ENCODE measurements at regions of chr17 and their contacts with region 1.

Region 1: DNA sequence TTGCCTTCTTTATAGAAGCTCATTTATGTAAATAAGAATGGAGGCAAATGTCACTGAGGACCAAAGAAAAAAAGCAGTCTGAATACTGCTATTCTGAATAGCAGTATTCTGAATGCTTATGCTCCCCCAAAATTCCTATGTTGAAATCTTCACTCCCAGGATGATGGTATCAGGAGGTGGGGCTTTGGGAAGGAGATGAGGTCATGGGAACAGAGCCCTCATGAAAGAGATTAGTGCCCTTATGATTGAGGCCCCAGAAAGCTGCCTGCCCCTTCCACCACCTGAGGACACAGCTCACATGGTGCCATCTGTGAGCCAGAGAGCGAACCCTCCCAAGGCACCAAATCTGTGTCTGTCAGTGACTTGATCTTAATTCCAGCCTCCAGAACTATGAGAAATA is 28.8 kb downstream of the HEATR6 start:
- DNase-seq: no peak
- ATAC-seq: no peak
- H3K4me3 ChIP-seq: no peak overlapping the region
- H3K27ac ChIP-seq: no peak overlapping the region
- H3K4me1 ChIP-seq: no peaks in the 10 kb centered on the region
- H3K27me3 ChIP-seq: no peaks in the 10 kb centered on the region

Region 2: DNA sequence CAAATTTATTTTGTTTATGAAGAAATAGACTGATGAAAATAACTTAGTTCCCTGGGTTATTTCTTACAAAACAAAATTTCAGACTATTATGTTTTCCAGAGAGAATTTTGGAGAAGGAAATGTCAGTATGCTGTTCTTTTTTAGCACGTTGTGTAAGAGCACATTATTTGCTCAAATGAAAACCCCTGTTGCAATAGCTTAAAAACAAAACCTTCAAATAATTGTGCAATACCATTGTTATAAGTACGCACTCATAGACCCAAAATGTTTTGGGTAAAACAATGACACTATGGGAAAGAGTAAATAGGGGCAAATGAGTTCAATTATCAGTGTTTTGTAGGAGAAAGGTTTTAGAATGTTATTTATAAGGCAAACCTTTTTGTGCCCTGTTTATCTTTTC is 324.2 kb before region 1 on chr17:
- intact Hi-C with region 1: loop called in 1 of 2 experiments (anchors 5 kb)
- DNase-seq: no peak
- ATAC-seq: peak; percentile 84
- H3K4me3 ChIP-seq: no peak overlapping the region
- H3K27ac ChIP-seq: no peak overlapping the region
- H3K4me1 ChIP-seq: no peaks in the 10 kb centered on the region
- H3K27me3 ChIP-seq: no peaks in the 10 kb centered on the region

Region 3: DNA sequence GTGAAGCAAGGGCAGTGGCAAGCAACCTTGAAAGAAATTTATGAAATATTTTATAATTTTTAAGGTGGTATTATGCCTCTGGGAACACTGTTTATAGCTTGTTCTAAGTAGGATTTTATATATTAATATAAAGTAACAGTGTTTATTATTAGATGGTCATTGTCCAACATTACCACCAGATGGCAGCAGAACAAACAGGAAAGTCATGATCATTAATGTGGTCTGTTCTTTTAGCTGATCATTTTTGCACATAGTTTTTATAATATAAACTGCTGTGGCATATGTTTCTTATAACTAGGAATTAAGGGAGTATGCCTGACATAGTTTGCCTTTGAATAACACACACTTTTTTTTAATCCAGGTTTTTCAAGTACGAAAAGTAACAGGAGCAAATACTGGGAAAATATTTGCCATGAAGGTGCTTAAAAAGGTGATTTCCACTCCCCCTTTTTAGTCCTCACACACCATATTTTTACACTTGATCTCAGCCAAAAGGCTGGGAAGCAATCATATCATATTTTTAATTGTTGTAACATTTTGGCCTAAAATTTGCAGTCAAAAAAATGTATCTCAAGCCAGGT is 135.6 kb before region 1 on chr17:
- intact Hi-C with region 1: no loop called
- DNase-seq: no peak
- ATAC-seq: no peak
- H3K4me3 ChIP-seq: no peak overlapping the region
- H3K27ac ChIP-seq: no peak overlapping the region
- H3K4me1 ChIP-seq: no peaks in the 10 kb centered on the region
- H3K27me3 ChIP-seq: no peaks in the 10 kb centered on the region

Region 4: DNA sequence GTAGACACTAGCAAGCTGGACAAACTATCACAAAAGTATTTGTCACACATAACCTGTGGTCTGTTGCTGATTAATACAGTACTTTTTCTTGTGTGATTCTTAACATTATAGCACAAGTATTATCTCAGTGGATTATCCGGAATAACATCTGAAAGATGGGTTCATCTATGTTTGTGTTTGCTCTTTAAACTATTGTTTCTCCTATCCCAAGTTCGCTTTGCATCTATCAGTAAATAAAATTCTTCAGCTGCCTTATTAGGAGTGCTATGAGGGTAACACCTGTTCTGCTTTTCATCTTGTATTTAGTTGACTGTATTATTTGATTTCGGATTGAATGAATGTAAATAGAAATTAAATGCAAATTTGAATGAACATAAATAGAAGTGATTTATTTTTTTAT is 99.9 kb before region 1 on chr17:
- intact Hi-C with region 1: loop called in 1 of 2 experiments (anchors 10 kb)
- DNase-seq: no peak
- ATAC-seq: no peak
- H3K4me3 ChIP-seq: no peak overlapping the region
- H3K27ac ChIP-seq: no peak overlapping the region
- H3K4me1 ChIP-seq: no peaks in the 10 kb centered on the region
- H3K27me3 ChIP-seq: no peaks in the 10 kb centered on the region

Region 5: DNA sequence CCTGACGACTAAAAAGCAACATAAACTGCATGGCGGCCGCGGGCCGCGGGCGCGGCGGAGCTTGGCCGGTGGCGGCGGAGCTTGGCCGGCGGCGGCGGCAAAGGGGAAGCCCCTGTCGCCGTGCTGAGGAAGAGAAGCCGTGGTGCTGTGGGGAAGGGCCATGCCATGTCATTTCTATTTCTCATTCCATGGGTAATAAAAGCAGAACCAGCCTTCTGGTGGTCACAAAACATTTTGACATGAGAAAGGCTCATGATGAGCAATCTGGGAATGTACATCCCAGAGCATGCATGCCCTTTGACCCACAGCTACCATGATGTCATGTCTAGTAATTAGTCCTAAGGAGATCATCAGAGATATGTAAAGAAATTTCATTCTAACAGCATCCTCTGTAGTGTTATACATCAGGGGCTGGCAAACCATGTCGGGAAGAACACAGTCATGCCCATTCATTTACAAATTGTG is 52.7 kb after region 1 on chr17:
- intact Hi-C with region 1: no loop called
- DNase-seq: peak; percentile 74 to 78
- ATAC-seq: no peak
- H3K4me3 ChIP-seq: no peak overlapping the region
- H3K27ac ChIP-seq: no peak overlapping the region
- H3K4me1 ChIP-seq: no peaks in the 10 kb centered on the region
- H3K27me3 ChIP-seq: no peaks in the 10 kb centered on the region

Region 6: DNA sequence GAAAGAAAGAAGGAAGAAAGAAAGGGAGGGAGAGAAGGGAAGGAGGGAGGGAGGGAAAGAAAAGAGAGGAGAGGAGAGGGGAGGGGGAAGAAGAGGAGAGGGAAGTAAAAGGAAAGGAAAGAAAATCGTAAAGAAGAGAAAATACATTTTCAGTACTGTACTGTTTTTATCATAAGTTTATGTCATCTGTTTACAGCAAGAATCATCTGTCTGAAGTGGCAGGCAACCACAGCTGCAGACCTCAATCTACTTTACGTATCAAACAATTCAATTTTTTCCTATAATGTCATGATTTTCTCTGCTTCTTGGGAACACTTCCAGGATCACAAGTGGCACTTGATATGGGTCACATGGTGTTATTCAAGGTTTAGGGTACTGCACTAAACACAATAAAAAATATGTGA is 283.7 kb after region 1 on chr17:
- intact Hi-C with region 1: no loop called
- DNase-seq: no peak
- ATAC-seq: no peak
- H3K4me3 ChIP-seq: no peak overlapping the region
- H3K27ac ChIP-seq: no peak overlapping the region
- H3K4me1 ChIP-seq: no peaks in the 10 kb centered on the region
- H3K27me3 ChIP-seq: no peaks in the 10 kb centered on the region